Transverse colon (tissue), 4 donors: ENCODE measurements at regions of chr3 and their contacts with region 1.

Region 1: GRCh38 chr3:8170971-8171508 is 330.6 kb upstream of the LMCD1 start:
- DNase-seq: no peak
- H3K4me3 ChIP-seq: no peak overlapping the region
- H3K27ac ChIP-seq: no peak overlapping the region
- H3K4me1 ChIP-seq: no peaks in the 10 kb centered on the region
- H3K27me3 ChIP-seq: no peaks in the 10 kb centered on the region
- CTCF ChIP-seq: no peak
- EP300 ChIP-seq: no peak
- POLR2A ChIP-seq: no peak

Region 2: DNA sequence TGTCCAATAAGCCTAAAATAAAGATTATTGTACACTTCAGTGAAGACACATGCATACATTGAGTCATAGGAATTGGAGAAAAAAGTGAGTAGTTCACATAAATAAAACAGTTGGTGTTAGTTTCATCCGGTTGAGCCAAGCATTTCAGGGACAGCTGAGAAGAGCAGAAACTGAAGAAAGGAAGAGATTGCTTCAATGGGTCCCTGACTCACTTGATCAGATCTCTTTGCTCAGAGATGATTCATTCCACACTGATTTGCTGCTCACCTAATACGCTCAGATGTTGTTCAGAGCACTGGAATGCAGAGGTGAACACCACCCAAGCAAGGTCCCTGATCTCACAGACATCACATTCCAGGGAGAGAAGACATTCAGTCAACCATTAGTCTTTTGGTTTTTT is 698.6 kb after region 1 on chr3:
- in situ Hi-C with region 1: no loop called
- intact Hi-C with region 1: loop called (anchors 10 kb)
- DNase-seq: no peak
- H3K4me3 ChIP-seq: no peak overlapping the region
- H3K27ac ChIP-seq: no peak overlapping the region
- H3K4me1 ChIP-seq: no peaks in the 10 kb centered on the region
- H3K27me3 ChIP-seq: no peaks in the 10 kb centered on the region
- CTCF ChIP-seq: no peak
- EP300 ChIP-seq: no peak
- POLR2A ChIP-seq: no peak